ENCODE measurements at regions of chr9 and their contacts with region 1.

Region 1: GRCh38 chr9:82606492-82607382 is 456.2 kb downstream of the RASEF start:
- DNase-seq: peak; percentile 81
- ATAC-seq: peak; percentile 74
- H3K4me3 ChIP-seq: no peak overlapping the region
- H3K27ac ChIP-seq: no peak overlapping the region
- H3K4me1 ChIP-seq: peaks cover 5% of the 10 kb centered on the region; the same call in 1 of the 2 replicates
- H3K27me3 ChIP-seq: peaks cover 7% of the 10 kb centered on the region
- CTCF ChIP-seq: peak; percentile 80
- POLR2A ChIP-seq: peak; percentile 38; the same call in 1 of the 2 replicates
- RAD21 ChIP-seq: peak; percentile 89

Region 2: GRCh38 chr9:81394881-81395675 is 1211.7 kb before region 1 on chr9:
- CTCF ChIA-PET with region 1: no interaction called
- POLR2A ChIA-PET with region 1: no interaction called
- dilution Hi-C with region 1: no loop called
- in situ Hi-C with region 1: no loop called
- intact Hi-C with region 1: loop called (anchors 10 kb)
- DNase-seq: no peak
- ATAC-seq: peak; percentile 54
- H3K4me3 ChIP-seq: no peak overlapping the region
- H3K27ac ChIP-seq: peak overlapping the region; percentile 5; the same call in 1 of the 2 replicates
- H3K4me1 ChIP-seq: peaks cover 10% of the 10 kb centered on the region
- H3K27me3 ChIP-seq: no peaks in the 10 kb centered on the region
- CTCF ChIP-seq: no peak
- POLR2A ChIP-seq: no peak
- RAD21 ChIP-seq: no peak

Region 3: DNA sequence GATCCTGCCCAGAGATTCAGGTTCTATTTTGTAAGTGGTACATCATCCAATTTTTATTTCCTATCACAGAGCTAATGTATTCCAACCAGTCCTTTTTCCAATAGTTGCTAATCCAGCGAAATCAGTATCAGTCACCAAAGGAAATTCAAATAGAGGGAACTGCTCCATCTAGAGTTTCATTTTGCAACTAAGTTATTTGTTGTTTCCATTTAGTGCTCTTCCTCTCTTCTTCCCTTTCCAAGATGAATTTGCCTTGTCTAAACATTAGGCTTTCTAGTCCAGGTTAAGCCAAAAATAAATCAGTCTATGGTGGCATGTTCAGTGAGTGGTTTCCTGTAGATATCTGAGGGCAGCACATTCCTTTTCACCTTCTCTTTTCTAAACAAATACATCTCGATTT is 758.3 kb before region 1 on chr9:
- CTCF ChIA-PET with region 1: no interaction called
- POLR2A ChIA-PET with region 1: no interaction called
- dilution Hi-C with region 1: no loop called
- in situ Hi-C with region 1: no loop called
- intact Hi-C with region 1: loop called (anchors 5 kb)
- DNase-seq: peak; percentile 66
- ATAC-seq: peak; percentile 75
- H3K4me3 ChIP-seq: no peak overlapping the region
- H3K27ac ChIP-seq: no peak overlapping the region
- H3K4me1 ChIP-seq: no peaks in the 10 kb centered on the region; the same call in 1 of the 2 replicates
- H3K27me3 ChIP-seq: no peaks in the 10 kb centered on the region
- CTCF ChIP-seq: peak; percentile 63
- POLR2A ChIP-seq: no peak
- RAD21 ChIP-seq: peak; percentile 60

Region 4: DNA sequence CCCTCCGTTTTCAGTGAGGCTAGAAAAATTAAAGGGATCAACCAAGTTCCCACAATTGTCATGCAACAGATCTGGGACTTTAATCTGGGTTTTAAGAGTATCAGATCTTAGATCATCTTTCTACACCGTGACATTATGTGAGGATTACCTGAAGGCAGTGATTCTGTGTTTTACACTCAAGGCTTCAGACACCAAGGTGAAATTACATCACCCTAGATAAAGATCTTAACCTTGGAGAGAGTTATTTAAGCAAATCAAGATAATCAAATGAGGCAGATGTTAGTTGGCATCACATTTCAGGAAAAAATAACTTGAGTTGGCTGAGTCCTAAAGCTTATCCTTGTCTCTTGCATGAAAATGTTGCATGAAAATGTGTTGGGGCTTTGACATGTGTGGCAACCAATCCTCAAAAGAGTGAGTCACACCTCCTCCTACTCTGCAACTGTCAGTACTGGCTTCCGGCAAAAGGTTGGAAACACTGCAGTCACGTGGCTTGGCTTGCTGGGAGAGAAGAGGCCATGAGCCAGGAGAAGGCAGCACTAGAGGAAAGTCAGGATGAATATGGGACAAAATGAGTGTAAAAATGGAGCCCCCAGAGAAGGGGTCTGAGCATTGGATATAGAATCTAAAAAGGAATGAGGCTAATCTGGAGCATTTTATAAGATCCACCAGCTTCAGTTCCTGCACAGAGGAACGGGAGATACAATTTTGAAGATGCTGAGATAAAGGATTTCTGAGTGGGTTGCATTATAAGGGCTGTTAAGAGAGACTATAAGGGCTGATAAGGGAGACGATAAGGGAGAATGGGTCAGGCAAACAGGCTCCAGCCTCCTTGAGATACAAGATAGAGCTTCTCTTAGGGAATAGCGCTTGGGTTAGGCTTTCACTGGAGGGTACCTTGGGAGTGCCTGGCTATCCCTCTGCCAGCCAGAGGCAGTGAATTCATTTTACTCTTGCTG is 575.1 kb before region 1 on chr9:
- CTCF ChIA-PET with region 1: no interaction called
- POLR2A ChIA-PET with region 1: no interaction called
- dilution Hi-C with region 1: no loop called
- in situ Hi-C with region 1: no loop called
- intact Hi-C with region 1: loop called (anchors 10 kb)
- DNase-seq: peak; percentile 88
- ATAC-seq: peak; percentile 79
- H3K4me3 ChIP-seq: no peak overlapping the region
- H3K27ac ChIP-seq: no peak overlapping the region
- H3K4me1 ChIP-seq: peaks cover 4% of the 10 kb centered on the region; the same call in 1 of the 2 replicates
- H3K27me3 ChIP-seq: no peaks in the 10 kb centered on the region
- CTCF ChIP-seq: no peak
- POLR2A ChIP-seq: no peak
- RAD21 ChIP-seq: no peak

Region 5: DNA sequence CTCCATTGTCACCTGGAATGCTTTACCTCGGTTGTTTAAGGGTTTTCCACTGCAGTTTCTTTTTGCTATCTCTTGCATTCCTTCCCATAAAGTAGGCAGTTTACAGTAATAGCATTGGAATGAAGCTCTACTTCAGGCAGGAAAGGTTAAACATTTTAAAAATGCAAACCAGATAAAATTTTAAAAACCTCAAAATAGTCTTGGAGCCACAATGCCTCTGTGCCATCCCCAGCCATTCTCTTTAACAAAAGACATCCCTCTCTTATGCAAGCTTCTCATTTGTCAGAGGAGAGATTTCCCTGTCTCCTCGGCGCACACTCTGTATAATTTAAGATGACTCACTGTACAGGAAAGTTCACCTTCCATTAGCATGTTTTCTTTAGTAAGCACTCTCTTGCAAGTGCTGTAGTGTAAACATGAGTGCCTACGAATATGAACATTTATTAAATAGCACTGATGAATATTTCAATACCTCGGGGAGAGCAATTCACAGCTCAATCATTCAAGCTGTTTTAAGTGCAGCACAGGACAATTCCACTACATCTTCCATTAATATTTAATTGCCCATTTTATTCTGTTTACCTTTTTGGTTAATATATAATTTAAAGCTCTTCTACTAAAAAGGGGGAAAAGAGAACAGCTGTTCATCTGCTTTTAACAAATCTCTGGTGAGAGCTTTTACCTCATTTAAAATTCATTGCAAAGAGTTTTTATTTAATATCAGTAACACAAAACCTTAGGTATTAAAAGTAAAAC is 274.5 kb before region 1 on chr9:
- CTCF ChIA-PET with region 1: no interaction called
- POLR2A ChIA-PET with region 1: no interaction called
- dilution Hi-C with region 1: no loop called
- in situ Hi-C with region 1: no loop called
- intact Hi-C with region 1: loop called (anchors 10 kb)
- DNase-seq: peak; percentile 85
- ATAC-seq: peak; percentile 76
- H3K4me3 ChIP-seq: no peak overlapping the region
- H3K27ac ChIP-seq: peak overlapping the region; percentile 40
- H3K4me1 ChIP-seq: peaks cover 12% of the 10 kb centered on the region
- H3K27me3 ChIP-seq: no peaks in the 10 kb centered on the region
- CTCF ChIP-seq: no peak
- POLR2A ChIP-seq: no peak
- RAD21 ChIP-seq: no peak

Region 6: GRCh38 chr9:82961504-82962125 is 354.9 kb after region 1 on chr9:
- CTCF ChIA-PET with region 1: interaction called, 4 read pairs
- POLR2A ChIA-PET with region 1: no interaction called
- dilution Hi-C with region 1: no loop called
- in situ Hi-C with region 1: no loop called
- intact Hi-C with region 1: loop called (anchors 10 kb)
- DNase-seq: peak; percentile 70
- ATAC-seq: peak; percentile 96
- H3K4me3 ChIP-seq: no peak overlapping the region
- H3K27ac ChIP-seq: no peak overlapping the region
- H3K4me1 ChIP-seq: no peaks in the 10 kb centered on the region
- H3K27me3 ChIP-seq: peaks cover 4% of the 10 kb centered on the region; the same call in 1 of the 2 replicates
- CTCF ChIP-seq: peak; percentile 89
- POLR2A ChIP-seq: no peak
- RAD21 ChIP-seq: peak; percentile 88